Activated CD4-positive, alpha-beta memory T cell treated with anti-CD3 and anti-CD28 coated beads, Interleukin-2, amount 10 ng/mL, durations not matched to agents 7 days and 5 days (primary cell): ENCODE measurements at regions of chr9 and their contacts with region 1.

Region 1: GRCh38 chr9:133121198-133121939 is at the start of gene RALGDS:
- DNase-seq: peak; percentile 91
- H3K4me3 Mint-ChIP-seq: peak within 1 kb of the TSS; percentile 69
- H3K27ac Mint-ChIP-seq: peak within 1 kb of the TSS; percentile 70
- H3K4me1 Mint-ChIP-seq: peaks cover 86% of the 10 kb centered on the region
- H3K27me3 Mint-ChIP-seq: no peaks in the 10 kb centered on the region
- total RNA-seq, gene RALGDS: 113 to 123 TPM

Region 2: GRCh38 chr9:132885718-132886333 is 235.5 kb before region 1 on chr9:
- CTCF ChIA-PET with region 1: no interaction called
- POLR2A ChIA-PET with region 1: no interaction called
- DNase-seq: no peak
- H3K4me3 Mint-ChIP-seq: no peak overlapping the region
- H3K27ac Mint-ChIP-seq: no peak overlapping the region
- H3K4me1 Mint-ChIP-seq: peaks cover 22% of the 10 kb centered on the region
- H3K27me3 Mint-ChIP-seq: no peaks in the 10 kb centered on the region

Region 3: DNA sequence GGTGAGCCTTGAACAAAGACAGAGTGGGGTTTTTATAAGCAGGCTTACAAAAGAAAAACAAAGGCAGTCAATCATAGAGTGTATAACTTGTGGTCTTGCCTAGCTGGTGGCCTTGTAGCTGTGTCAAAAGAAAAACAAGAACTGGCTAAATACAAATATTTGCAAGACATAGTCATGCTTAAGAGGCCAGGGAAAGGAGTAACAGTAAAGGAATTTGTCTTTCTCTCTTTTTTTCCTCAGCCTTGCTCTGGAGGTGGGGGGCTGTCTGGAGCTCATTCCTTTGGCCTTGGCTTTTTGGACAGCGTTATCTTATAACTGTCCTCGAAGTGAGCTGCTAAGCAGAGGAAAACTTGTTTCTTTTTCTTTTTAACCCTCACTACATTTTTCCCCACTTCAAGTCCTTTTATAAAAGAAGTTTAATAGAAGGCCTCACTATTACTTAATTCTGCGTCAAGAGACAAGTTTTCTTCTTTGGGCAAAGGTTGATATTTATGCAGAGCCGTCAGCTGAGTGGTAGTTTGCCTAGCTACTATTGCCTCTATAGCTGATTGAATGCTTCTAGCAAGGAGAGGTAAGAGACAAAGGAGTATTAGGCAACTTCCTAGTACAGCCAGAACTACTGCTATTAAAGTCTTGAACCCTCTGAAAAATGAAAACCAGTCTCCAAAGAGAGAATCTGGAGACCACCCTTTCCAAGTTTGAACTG is 45.3 kb before region 1 on chr9:
- CTCF ChIA-PET with region 1: no interaction called
- POLR2A ChIA-PET with region 1: no interaction called
- DNase-seq: no peak
- H3K4me3 Mint-ChIP-seq: no peak overlapping the region
- H3K27ac Mint-ChIP-seq: no peak overlapping the region
- H3K4me1 Mint-ChIP-seq: no peaks in the 10 kb centered on the region
- H3K27me3 Mint-ChIP-seq: peaks cover 20% of the 10 kb centered on the region

Region 4: DNA sequence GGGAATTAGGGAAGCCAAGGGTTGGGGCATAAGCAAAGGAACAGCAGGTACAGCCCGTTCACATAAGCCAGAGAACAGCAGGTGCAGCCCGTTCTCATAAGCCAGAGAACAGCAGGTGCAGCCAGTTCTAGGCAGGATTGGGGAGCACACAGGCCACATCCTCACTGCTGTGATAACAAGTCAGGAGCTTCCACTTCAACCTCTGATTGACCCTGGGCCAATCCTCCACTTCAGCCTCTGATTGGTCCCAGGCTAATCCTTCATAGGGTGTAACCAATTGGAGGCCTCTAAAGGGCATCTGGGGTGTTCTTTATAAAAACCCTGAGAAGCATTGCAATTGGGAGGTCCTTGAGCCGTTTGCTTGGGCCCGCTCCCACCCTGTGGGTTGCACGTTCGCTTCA is 32.1 kb before region 1 on chr9:
- CTCF ChIA-PET with region 1: no interaction called
- POLR2A ChIA-PET with region 1: no interaction called
- DNase-seq: no peak
- H3K4me3 Mint-ChIP-seq: no peak overlapping the region
- H3K27ac Mint-ChIP-seq: no peak overlapping the region
- H3K4me1 Mint-ChIP-seq: no peaks in the 10 kb centered on the region
- H3K27me3 Mint-ChIP-seq: no peaks in the 10 kb centered on the region

Region 5: DNA sequence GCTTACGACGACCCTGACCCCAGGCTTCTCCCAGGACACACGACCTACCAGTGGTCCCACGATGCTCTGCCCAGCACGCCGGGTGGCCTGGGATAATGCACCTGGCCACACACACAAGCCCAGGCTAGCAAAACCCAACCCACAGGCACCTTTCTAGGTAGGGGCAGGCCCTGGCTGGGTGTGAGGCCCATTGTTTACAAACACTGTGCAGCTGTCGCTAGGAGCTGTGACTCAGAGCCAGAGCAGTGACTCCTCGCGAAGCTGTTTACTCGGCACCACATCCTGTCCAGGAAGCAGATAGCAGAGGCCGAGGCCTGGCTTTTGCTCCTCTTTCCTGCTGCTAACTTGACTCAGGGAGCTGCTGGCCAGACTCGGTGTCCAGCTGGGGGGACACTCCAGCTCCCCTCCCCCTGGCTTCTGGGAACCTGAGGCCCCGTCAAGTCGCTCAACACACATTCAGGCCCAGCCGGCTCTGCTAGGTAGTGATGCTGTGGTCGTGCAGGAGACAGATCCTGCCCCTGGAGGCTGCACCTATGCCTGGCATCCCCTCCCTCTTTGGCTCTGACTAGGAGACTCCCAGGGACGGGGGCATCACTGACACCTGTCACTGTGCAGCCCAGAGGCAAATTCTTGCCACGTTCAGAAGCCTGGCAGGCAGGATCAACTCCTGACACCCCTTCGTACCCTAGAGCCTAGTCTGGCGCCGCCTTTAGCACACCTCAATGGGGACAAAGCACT is 12.5 kb after region 1 on chr9:
- CTCF ChIA-PET with region 1: interaction called, 5 read pairs
- POLR2A ChIA-PET with region 1: interaction called, 148 read pairs
- DNase-seq: peak; percentile 94
- H3K4me3 Mint-ChIP-seq: peak overlapping the region; percentile 36
- H3K27ac Mint-ChIP-seq: peak overlapping the region; percentile 99
- H3K4me1 Mint-ChIP-seq: peaks cover 88% of the 10 kb centered on the region
- H3K27me3 Mint-ChIP-seq: no peaks in the 10 kb centered on the region